Caco-2 (cell line): ENCODE measurements at regions of chr11 and their contacts with region 1.

Region 1: GRCh38 chr11:88543902-88544655 is 206.5 kb upstream of the CTSC start:
- DNase-seq: peak; percentile 83 to 91
- H3K4me3 ChIP-seq: no peak overlapping the region
- H3K4me3 Mint-ChIP-seq: no peak overlapping the region
- H3K27ac Mint-ChIP-seq: no peak overlapping the region
- H3K4me1 ChIP-seq: no peaks in the 10 kb centered on the region
- H3K4me1 Mint-ChIP-seq: peaks cover 7% of the 10 kb centered on the region
- H3K27me3 ChIP-seq: no peaks in the 10 kb centered on the region
- H3K27me3 Mint-ChIP-seq: peaks cover 14% of the 10 kb centered on the region
- CTCF ChIP-seq: peak; percentile 98 to 99

Region 2: DNA sequence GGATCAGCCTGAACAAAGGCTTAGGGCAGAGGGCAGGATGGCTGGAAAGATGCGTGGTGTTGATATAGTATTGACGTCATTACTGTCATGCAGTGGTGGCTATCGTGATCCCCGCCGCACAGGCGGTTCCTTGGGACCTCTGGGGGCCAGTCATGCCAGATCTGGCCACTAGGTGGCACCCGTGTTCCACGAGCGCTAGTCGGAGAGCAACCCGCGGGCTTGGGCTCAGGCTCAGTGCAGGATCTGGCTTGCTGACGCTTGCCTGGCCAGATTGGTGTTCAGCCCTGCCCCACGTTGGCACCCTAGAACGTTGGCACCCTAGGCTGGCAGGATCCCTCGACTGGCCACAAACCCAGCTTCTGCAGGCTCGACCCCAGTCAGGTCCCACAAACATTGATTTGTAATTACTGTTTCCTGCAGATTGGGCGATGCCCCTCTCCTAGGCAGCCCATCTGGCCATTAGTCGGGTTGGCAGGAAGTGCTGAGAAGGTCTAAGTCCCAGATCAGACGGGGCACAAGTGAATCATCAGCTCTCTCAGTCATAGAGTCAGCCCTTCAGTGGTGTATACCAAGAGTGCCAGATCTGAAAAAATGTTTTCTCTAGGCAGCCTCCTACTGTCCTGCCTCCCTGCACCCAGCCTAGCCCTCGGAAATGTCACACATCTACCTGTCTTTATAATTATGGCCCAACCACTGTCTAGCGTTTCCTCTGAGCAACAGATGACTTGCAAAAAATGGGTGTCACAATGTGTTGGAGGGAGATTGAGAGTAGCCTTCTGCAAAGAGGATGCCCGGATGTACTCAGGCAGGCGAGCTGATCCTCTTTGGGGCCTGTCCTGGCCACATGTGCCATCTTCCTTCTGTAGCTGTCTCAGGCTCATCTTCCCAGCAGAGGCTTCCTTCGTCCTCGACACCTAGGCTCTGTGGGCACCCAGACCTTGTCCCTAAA is 1191.0 kb before region 1 on chr11:
- CTCF ChIA-PET with region 1: no interaction called
- POLR2A ChIA-PET with region 1: no interaction called
- intact Hi-C with region 1: loop called (anchors 1 kb)
- DNase-seq: peak; percentile 87 to 96
- H3K4me3 ChIP-seq: no peak overlapping the region
- H3K4me3 Mint-ChIP-seq: no peak overlapping the region
- H3K27ac Mint-ChIP-seq: no peak overlapping the region
- H3K4me1 ChIP-seq: peaks cover 11% of the 10 kb centered on the region
- H3K4me1 Mint-ChIP-seq: peaks cover 2% of the 10 kb centered on the region
- H3K27me3 ChIP-seq: no peaks in the 10 kb centered on the region
- H3K27me3 Mint-ChIP-seq: no peaks in the 10 kb centered on the region
- CTCF ChIP-seq: peak; percentile 99 to 100

Region 3: GRCh38 chr11:87743007-87743406 is 801.1 kb before region 1 on chr11:
- CTCF ChIA-PET with region 1: no interaction called
- POLR2A ChIA-PET with region 1: no interaction called
- intact Hi-C with region 1: loop called (anchors 1 kb)
- DNase-seq: peak in 1 of 2 experiments; percentile 39
- H3K4me3 ChIP-seq: no peak overlapping the region
- H3K4me3 Mint-ChIP-seq: no peak overlapping the region
- H3K27ac Mint-ChIP-seq: no peak overlapping the region
- H3K4me1 ChIP-seq: no peaks in the 10 kb centered on the region
- H3K4me1 Mint-ChIP-seq: peaks cover 7% of the 10 kb centered on the region
- H3K27me3 ChIP-seq: no peaks in the 10 kb centered on the region
- H3K27me3 Mint-ChIP-seq: no peaks in the 10 kb centered on the region
- CTCF ChIP-seq: peak; percentile 33 to 49

Region 4: DNA sequence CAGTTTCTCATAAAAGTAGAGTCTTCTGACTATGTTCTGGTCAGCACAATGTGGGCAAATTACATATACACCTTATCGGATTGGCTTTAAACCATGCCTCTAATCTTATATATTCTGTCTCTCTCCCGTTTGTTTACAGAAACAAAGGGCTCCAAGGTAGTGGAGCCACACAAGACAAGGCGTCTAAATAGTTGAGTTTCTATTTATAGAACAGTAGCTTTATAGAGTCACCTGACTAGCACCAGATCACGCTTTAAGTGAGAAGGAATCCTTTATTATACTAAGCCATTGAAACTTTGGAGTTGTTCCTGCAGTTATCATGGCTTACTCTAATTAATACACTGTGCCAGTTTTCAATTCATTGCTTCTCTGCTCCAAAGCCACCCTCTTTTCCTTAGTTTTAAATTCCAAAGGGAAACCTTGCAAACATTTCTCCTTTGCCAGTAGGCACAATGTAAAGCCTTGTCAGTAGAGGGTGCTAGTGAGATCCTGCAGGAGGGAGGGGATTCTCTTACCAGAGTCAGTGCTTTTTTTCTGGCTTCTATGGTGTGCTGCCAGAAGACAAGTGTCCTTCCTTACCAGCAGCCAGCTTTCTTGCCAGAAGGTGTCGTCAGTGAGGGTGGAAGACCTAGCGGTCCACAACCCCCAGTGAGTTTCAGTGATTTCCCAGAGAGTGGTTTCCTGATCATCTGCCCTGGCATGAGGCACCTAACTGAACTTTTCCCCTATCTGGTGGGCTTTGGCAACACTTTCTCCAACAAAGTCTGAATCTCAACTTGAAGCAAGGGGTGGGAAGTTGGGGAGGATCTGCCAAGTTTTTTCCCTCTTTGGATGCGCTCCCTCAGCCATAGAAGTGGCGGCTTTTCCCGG is 440.5 kb before region 1 on chr11:
- CTCF ChIA-PET with region 1: interaction called, 8 read pairs
- POLR2A ChIA-PET with region 1: no interaction called
- intact Hi-C with region 1: loop called (anchors 1 kb)
- DNase-seq: peak; percentile 88 to 89
- H3K4me3 ChIP-seq: no peak overlapping the region
- H3K4me3 Mint-ChIP-seq: no peak overlapping the region
- H3K27ac Mint-ChIP-seq: no peak overlapping the region
- H3K4me1 ChIP-seq: no peaks in the 10 kb centered on the region
- H3K4me1 Mint-ChIP-seq: no peaks in the 10 kb centered on the region
- H3K27me3 ChIP-seq: no peaks in the 10 kb centered on the region
- H3K27me3 Mint-ChIP-seq: peaks cover 8% of the 10 kb centered on the region
- CTCF ChIP-seq: peak; percentile 92 to 98

Region 5: GRCh38 chr11:88231894-88232482 is 312.1 kb before region 1 on chr11:
- CTCF ChIA-PET with region 1: interaction called, 5 read pairs
- POLR2A ChIA-PET with region 1: no interaction called
- intact Hi-C with region 1: loop called (anchors 1 kb)
- DNase-seq: peak in 1 of 2 experiments; percentile 54
- H3K4me3 ChIP-seq: no peak overlapping the region
- H3K4me3 Mint-ChIP-seq: no peak overlapping the region
- H3K27ac Mint-ChIP-seq: no peak overlapping the region
- H3K4me1 ChIP-seq: no peaks in the 10 kb centered on the region
- H3K4me1 Mint-ChIP-seq: no peaks in the 10 kb centered on the region
- H3K27me3 ChIP-seq: no peaks in the 10 kb centered on the region
- H3K27me3 Mint-ChIP-seq: no peaks in the 10 kb centered on the region
- CTCF ChIP-seq: peak; percentile 68 to 73

Region 6: DNA sequence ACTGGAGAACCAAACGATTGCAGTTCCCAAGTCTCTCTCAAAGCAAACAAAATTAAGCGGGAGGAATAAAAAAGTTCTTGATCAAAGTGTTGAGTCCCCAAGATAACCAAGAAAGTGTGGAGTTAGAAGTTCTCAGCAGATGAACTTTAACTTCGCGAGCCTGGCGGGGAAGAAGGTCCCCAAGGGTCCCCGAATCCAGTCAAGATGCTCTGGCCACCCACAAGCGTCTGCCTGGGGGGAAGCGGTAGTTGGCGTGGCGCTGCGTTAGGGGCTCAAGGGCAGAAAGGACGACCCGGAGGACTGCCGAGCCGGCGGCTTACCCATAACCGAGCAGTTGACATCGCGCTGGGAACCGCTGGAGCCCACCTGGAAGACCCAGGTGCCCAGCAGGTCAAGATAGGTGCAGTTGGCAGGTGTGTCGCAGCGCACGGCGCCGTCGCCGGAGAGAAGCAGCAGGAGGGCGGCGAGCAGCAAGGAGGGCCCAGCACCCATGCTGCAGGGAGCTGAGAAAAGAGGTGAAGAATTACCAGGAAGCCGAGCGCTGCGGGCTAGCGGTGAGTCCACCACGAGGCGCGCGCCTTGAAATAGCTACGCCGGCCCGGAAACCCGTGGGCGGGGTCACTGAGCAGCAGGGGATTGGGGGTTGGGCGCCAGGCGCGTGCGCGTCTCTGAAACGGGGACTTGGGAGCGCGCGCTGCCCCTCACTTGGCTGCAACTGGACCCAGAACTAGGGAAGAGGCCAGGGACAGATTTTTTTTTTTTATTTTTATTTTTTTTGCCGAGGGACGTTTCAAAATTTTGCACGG is 206.7 kb before region 1 on chr11 and contains the start of gene CTSC:
- CTCF ChIA-PET with region 1: interaction called, 3 read pairs
- POLR2A ChIA-PET with region 1: no interaction called
- intact Hi-C with region 1: loop called (anchors 1 kb)
- DNase-seq: peak; percentile 97 to 99
- H3K4me3 ChIP-seq: peak within 1 kb of the TSS; percentile 69
- H3K4me3 Mint-ChIP-seq: peak within 1 kb of the TSS; percentile 88
- H3K27ac Mint-ChIP-seq: peak within 1 kb of the TSS; percentile 82
- H3K4me1 ChIP-seq: no peaks in the 10 kb centered on the region; the same call in 1 of the 2 replicates
- H3K4me1 Mint-ChIP-seq: peaks cover 9% of the 10 kb centered on the region
- H3K27me3 ChIP-seq: no peaks in the 10 kb centered on the region
- H3K27me3 Mint-ChIP-seq: no peaks in the 10 kb centered on the region
- CTCF ChIP-seq: no peak
- total RNA-seq, gene CTSC: 250 and 308 TPM in 2 replicates

Region 7: DNA sequence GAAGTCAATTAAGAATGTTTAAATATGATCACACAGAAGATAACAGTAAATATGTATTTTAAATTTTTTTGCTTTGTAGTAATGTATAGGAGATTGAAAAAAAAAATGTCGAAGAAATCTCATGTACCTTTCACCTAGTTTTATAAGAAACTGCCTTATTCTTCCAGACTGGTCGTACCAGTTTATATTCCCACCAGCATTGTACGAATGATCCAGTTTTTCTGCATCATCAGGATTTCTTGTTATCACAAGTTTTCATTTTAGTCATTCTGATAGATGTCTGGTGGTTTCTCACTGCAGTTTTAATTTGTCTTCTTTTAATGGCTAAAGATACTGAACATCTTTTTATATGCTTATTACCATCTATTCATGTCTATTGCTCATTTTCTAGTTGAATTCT is 104.7 kb before region 1 on chr11:
- CTCF ChIA-PET with region 1: no interaction called
- POLR2A ChIA-PET with region 1: no interaction called
- intact Hi-C with region 1: no loop called
- DNase-seq: no peak
- H3K4me3 ChIP-seq: no peak overlapping the region
- H3K4me3 Mint-ChIP-seq: no peak overlapping the region
- H3K27ac Mint-ChIP-seq: no peak overlapping the region
- H3K4me1 ChIP-seq: no peaks in the 10 kb centered on the region
- H3K4me1 Mint-ChIP-seq: no peaks in the 10 kb centered on the region
- H3K27me3 ChIP-seq: no peaks in the 10 kb centered on the region
- H3K27me3 Mint-ChIP-seq: no peaks in the 10 kb centered on the region
- CTCF ChIP-seq: no peak